PC-3 (cell line): ENCODE measurements at regions of chr19 and their contacts with region 1.

Region 1: DNA sequence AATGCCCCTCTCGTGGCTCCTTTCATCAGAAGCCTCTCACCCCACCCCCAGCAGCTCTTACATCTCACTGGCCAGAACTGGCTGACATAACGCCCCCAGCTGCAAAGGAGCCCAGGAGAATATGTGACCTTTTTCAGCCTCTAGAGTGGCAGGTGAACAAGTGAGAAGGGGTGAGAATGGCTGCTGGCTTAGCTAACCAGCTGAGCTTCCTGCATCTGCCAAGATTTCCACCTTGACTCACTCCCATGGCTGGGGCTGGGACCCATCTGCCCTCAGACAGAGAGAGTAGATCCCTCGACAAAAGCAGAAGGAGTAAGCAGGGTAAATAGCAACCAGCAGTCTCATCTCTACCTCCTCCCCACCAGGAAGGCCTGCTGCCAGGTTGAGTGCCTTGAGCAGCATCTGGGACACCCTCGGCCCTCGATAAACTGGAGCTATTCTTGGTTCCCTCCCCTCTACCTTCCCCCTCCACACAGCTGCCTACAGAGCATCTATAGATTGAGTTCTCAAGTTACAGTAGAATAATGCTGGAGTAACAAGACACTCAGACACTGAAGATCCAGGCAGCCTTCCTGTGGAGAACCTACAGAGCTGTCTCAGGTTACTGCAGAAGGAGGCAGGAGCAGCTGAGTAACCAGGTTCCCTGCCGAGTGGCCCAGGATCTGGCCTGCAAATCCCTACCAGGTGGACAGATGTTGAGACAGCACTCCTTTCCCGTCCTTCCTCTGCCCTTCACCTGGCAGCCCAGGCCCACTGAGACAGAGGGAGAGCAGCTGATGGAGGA is 15.5 kb downstream of the KASH5 start:
- DNase-seq: peak; percentile 89
- ATAC-seq: peak; percentile 99
- H3K4me3 ChIP-seq: 0 out of 2 replicates have a peak overlapping the region, but pooled peaks have one; percentile 9
- H3K27ac ChIP-seq: peak overlapping the region; percentile 29
- H3K4me1 ChIP-seq: peaks cover 15% of the 10 kb centered on the region
- H3K27me3 ChIP-seq: no peaks in the 10 kb centered on the region
- CTCF ChIP-seq: no peak

Region 2: DNA sequence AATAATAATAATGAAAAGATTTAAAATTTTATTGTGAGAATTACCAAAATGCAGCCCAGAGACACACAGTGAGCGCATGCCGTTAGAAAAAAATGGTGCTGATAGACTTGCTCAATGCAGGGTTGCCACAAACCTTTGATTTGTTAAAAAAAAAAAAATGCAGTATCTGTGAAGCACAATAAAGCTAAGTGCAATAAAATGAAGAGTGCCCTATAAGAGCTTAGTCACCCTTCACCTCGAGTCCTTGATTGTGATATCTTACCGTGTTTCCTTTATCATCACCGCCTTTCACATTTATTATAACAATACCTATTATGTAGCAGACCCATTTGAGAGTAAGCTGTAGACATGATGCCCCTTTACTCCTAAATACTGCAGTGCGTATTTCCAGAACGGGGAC is 161.8 kb before region 1 on chr19:
- CTCF ChIA-PET with region 1: no interaction called
- POLR2A ChIA-PET with region 1: interaction called, 23 read pairs
- intact Hi-C with region 1: no loop called
- DNase-seq: no peak
- ATAC-seq: no peak
- H3K4me3 ChIP-seq: no peak overlapping the region
- H3K27ac ChIP-seq: no peak overlapping the region
- H3K4me1 ChIP-seq: no peaks in the 10 kb centered on the region
- H3K27me3 ChIP-seq: no peaks in the 10 kb centered on the region
- CTCF ChIP-seq: no peak